ENCODE measurements at regions of chr6 and their contacts with region 1.

Region 1: GRCh38 chr6:144104898-144105487 is 9.6 kb upstream of the SF3B5 start:
- DNase-seq: peak; percentile 65
- CTCF ChIP-seq: peak; percentile 52

Region 2: DNA sequence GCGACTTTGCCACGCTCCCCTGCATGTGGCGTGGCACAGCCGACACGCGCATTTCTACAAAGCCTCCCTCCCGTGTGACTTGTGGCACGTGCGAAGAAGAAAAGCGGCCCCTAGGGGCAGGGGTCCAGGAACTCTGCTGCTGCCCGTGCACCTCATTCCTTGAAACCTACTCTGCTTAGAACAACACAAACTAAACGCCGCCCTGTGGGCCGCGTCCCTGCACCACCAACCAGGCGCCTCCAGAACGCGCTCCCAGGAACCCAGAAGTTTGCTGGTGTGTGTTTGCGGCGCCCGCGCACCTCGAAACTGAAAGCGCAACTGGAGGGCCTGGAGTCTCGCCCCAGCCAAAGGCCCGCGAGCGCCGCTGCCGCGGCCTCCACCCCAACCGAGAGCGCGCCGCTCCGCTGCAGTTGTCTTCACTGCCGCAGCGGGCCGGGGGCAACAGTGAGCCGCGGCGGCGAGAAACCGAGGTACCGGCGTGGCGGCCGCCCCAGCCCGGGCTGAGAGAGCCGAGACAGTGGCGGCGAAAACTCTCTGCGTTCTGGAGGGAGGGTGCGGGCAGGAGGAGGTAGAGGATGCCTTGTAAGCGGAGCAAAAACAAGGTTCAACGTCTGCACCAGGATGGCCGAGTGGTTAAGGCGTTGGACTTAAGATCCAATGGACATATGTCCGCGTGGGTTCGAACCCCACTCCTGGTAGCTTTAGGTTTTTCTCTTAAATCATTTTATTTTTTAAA is 111.1 kb after region 1 on chr6:
- in situ Hi-C with region 1: loop called (anchors 5 kb)
- DNase-seq: peak; percentile 96
- CTCF ChIP-seq: peak; percentile 56

Region 3: GRCh38 chr6:144482142-144482541 is 377.1 kb after region 1 on chr6:
- in situ Hi-C with region 1: loop called (anchors 10 kb)
- DNase-seq: peak; percentile 72
- CTCF ChIP-seq: peak; percentile 81

Measured in GM13976 (cell line).